ENCODE measurements at regions of chr6 and their contacts with region 1.

Region 1: DNA sequence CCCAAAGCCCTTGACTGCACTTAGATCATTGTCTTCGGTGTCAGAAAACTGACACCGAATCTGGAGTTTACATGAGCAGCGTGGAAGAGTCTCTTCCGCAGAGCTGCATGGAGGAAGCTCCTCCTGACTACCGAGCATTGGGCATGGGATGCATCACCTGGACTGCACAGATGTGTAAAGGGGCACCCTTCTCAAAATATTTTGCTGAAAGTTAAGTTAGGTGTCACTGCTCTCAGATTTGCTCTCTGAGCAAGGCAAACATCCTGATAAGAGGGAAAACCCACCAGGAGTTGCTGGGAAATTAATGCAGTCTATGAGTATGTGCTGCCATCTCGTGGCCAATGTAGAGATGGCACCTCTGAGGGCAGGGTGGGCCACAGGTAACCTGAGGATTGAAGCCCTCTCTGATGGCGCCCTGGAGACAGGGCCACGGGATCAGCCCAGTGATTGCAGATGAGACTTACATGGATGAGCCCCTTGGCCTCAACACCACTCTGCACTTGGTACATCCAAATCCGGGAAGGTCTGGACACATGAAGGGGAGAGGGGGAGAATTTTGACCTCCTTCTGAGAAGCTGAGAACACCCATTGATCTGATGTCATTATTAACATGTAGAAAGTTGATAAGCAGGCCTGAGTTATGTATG is 129.9 kb downstream of the LPA start:
- DNase-seq: peak; percentile 72

Region 2: GRCh38 chr6:160520043-160520904 is 13.9 kb before region 1 on chr6:
- CTCF ChIA-PET with region 1: interaction called, 21 read pairs
- POLR2A ChIA-PET with region 1: interaction called, 3 read pairs
- DNase-seq: peak; percentile 85